Naive thymus-derived CD4-positive, alpha-beta T cell (primary cell): ENCODE measurements at regions of chr17 and their contacts with region 1.

Region 1: GRCh38 chr17:48074315-48075081 is 26.3 kb downstream of the NFE2L1 start:
- DNase-seq: peak; percentile 21 to 74 (median 65)
- ATAC-seq: peak; percentile 85
- H3K4me3 ChIP-seq: no peak overlapping the region
- H3K4me3 Mint-ChIP-seq: no peak overlapping the region
- H3K27ac ChIP-seq: no peak overlapping the region
- H3K27ac Mint-ChIP-seq: peak overlapping the region in 2 of 9 donors; percentile 9 to 25
- H3K4me1 ChIP-seq: no peaks in the 10 kb centered on the region
- H3K4me1 Mint-ChIP-seq: peaks cover 0 to 8% (median 0%) of the 10 kb centered on the region in 7 donors
- H3K27me3 ChIP-seq: no peaks in the 10 kb centered on the region
- H3K27me3 Mint-ChIP-seq: no peaks in the 10 kb centered on the region

Region 2: DNA sequence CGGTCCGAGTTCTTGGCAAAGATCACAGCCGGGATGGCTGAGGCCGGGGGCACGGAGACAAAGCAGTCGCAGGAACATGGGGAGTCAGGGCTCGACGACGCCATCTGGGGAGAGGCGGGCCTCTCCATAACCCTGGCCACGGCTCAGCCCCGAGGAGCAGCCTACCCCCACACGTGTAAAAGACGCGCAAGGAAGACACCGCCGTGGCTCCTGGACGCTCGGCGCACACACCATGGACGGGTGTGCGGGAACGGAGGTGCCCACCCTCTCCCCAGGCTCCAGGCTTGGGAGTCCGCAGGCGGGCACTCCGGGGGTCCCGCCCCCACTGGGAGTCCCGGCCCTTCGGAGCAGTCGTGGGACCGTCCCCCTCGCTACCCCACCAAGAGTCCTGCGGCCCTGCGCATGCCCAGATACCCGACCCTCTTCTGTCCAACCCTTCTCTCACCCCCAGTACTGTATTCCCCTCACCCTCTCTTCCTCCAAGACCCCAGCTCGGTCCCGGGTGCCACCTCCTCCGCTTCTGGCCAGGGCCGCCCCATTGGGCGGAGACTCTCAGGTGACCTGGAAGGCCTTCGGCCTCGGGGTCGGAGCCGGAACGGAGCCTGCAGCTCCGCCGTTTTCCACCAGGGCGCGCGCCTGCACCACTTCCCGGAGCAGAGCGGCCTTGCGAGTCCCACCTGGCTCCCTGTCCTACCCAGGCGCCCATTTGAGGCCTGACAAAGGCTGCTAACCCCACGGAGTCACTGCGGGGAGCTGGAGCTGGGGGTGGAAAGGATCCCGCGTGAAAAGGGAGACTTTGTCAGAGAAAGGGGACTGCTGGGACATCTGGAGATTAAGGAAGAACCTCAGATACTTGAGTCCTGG is 233.5 kb before region 1 on chr17 and contains the start of gene SCRN2:
- CTCF ChIA-PET with region 1: no interaction called
- POLR2A ChIA-PET with region 1: no interaction called
- intact Hi-C with region 1: loop called in 1 of 2 experiments (anchors 5 kb)
- DNase-seq: peak; percentile 71 to 94 (median 81)
- ATAC-seq: peak; percentile 94
- H3K4me3 ChIP-seq: peak within 1 kb of the TSS; percentile 95
- H3K4me3 Mint-ChIP-seq: peak within 1 kb of the TSS; percentile 84 to 99 (median 94)
- H3K27ac ChIP-seq: peak within 1 kb of the TSS; percentile 75
- H3K27ac Mint-ChIP-seq: peak within 1 kb of the TSS; percentile 55 to 93 (median 86)
- H3K4me1 ChIP-seq: peaks cover 19 to 21% of the 10 kb centered on the region in 2 donors
- H3K4me1 Mint-ChIP-seq: peaks cover 9 to 49% (median 38%) of the 10 kb centered on the region in 7 donors
- H3K27me3 ChIP-seq: peaks cover 0 to 7% of the 10 kb centered on the region in 2 donors
- H3K27me3 Mint-ChIP-seq: peaks cover 6 to 23% (median 18%) of the 10 kb centered on the region in 5 donors
- total RNA-seq, gene SCRN2: 33.4 to 55.9 (median 41.4) TPM

Region 3: GRCh38 chr17:47884905-47885733 is 189.4 kb before region 1 on chr17:
- CTCF ChIA-PET with region 1: no interaction called
- POLR2A ChIA-PET with region 1: no interaction called
- intact Hi-C with region 1: no loop called
- DNase-seq: peak in 6 of 9 donors; percentile 10 to 37 (median 34)
- ATAC-seq: peak; percentile 36
- H3K4me3 ChIP-seq: no peak overlapping the region
- H3K4me3 Mint-ChIP-seq: peak overlapping the region in 8 of 10 donors; percentile 42 to 70 (median 65)
- H3K27ac ChIP-seq: no peak overlapping the region
- H3K27ac Mint-ChIP-seq: peak overlapping the region in 5 of 9 donors; percentile 8 to 64 (median 26)
- H3K4me1 ChIP-seq: peaks cover 0 to 31% of the 10 kb centered on the region in 2 donors
- H3K4me1 Mint-ChIP-seq: peaks cover 21 to 43% (median 37%) of the 10 kb centered on the region in 7 donors
- H3K27me3 ChIP-seq: no peaks in the 10 kb centered on the region
- H3K27me3 Mint-ChIP-seq: peaks cover 0 to 5% (median 0%) of the 10 kb centered on the region in 5 donors

Region 4: DNA sequence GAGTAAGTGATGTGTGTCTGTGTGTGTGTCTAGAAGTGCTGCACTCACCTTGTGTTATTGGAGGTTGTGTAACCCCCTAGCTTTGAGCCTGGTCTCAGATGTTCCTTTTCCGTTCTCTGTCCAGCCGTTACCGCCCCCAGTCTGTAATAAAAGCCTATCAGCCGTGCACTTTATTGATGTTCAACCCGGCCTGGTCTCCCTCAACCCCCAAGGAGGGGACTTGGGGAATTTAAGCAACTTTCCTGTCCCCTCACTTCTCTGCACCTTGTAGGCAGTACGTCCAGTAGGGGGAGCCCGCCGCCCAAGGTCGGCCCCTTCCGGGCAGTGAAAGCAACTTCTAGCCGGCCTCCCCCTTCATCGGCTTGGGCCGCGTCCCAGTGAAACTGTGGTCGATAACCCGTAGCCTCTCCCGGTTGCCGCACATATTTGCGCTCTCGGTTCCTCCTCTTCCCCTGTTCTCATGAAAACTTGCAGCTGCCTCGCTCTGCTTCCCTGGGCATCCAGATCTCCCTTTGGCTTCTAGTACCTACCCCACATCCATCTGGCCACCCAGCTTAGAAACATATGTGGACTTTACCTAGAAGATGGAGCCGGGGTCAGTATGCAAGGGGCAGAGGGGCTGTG is 125.2 kb before region 1 on chr17:
- CTCF ChIA-PET with region 1: interaction called, 9 read pairs
- POLR2A ChIA-PET with region 1: no interaction called
- intact Hi-C with region 1: loop called in 1 of 2 experiments (anchors 1 kb)
- DNase-seq: peak; percentile 47 to 87 (median 62)
- ATAC-seq: peak; percentile 82
- H3K4me3 ChIP-seq: peak overlapping the region; percentile 44
- H3K4me3 Mint-ChIP-seq: peak overlapping the region; percentile 63 to 90 (median 77)
- H3K27ac ChIP-seq: peak overlapping the region; percentile 55
- H3K27ac Mint-ChIP-seq: peak overlapping the region; percentile 57 to 86 (median 76)
- H3K4me1 ChIP-seq: peaks cover 22 to 40% of the 10 kb centered on the region in 2 donors
- H3K4me1 Mint-ChIP-seq: peaks cover 30 to 56% (median 49%) of the 10 kb centered on the region in 7 donors
- H3K27me3 ChIP-seq: no peaks in the 10 kb centered on the region
- H3K27me3 Mint-ChIP-seq: no peaks in the 10 kb centered on the region

Region 5: GRCh38 chr17:47970704-47971463 is 103.6 kb before region 1 on chr17 and contains the start of gene CDK5RAP3:
- CTCF ChIA-PET with region 1: interaction called, 7 read pairs
- POLR2A ChIA-PET with region 1: no interaction called
- intact Hi-C with region 1: loop called in 1 of 2 experiments (anchors 2 kb)
- DNase-seq: peak; percentile 93 to 99 (median 97)
- ATAC-seq: peak; percentile 100
- H3K4me3 ChIP-seq: peak within 1 kb of the TSS; percentile 96
- H3K4me3 Mint-ChIP-seq: peak within 1 kb of the TSS; percentile 95 to 100 (median 99)
- H3K27ac ChIP-seq: peak within 1 kb of the TSS; percentile 71
- H3K27ac Mint-ChIP-seq: peak within 1 kb of the TSS; percentile 83 to 96 (median 93)
- H3K4me1 ChIP-seq: peaks cover 6 to 12% of the 10 kb centered on the region in 2 donors
- H3K4me1 Mint-ChIP-seq: peaks cover 14 to 41% (median 26%) of the 10 kb centered on the region in 7 donors
- H3K27me3 ChIP-seq: no peaks in the 10 kb centered on the region
- H3K27me3 Mint-ChIP-seq: no peaks in the 10 kb centered on the region
- total RNA-seq, gene CDK5RAP3: 238 to 349 (median 276) TPM

Region 6: DNA sequence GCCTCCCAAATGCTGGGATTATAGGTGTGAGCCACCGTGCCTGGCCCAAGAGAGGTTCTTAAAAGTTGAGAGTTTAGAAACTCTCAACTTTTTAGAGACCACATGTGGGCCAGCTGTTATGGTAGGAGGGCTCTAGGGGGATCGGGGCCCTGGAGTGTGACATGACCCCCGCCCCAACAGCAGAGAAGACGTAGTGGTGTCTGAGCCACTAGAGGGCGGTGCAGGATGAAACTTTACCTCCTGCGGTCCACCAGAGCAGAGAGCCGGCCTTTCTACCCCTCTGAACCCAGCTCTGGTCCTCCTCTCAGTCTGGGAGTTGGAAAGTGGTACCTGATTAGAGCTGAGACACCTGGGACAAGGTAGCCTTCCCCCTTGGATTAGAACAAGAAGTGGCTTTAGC is 96.2 kb before region 1 on chr17:
- CTCF ChIA-PET with region 1: interaction called, 12 read pairs
- POLR2A ChIA-PET with region 1: no interaction called
- intact Hi-C with region 1: loop called in 1 of 2 experiments (anchors 1 kb)
- DNase-seq: peak in 7 of 9 donors; percentile 18 to 52 (median 35)
- ATAC-seq: peak; percentile 78
- H3K4me3 ChIP-seq: no peak overlapping the region
- H3K4me3 Mint-ChIP-seq: no peak overlapping the region
- H3K27ac ChIP-seq: no peak overlapping the region
- H3K27ac Mint-ChIP-seq: no peak overlapping the region
- H3K4me1 ChIP-seq: peaks cover 0 to 5% of the 10 kb centered on the region in 2 donors
- H3K4me1 Mint-ChIP-seq: peaks cover 0 to 12% (median 4%) of the 10 kb centered on the region in 7 donors
- H3K27me3 ChIP-seq: no peaks in the 10 kb centered on the region
- H3K27me3 Mint-ChIP-seq: no peaks in the 10 kb centered on the region

Region 7: GRCh38 chr17:48011405-48012150 is 62.9 kb before region 1 on chr17:
- CTCF ChIA-PET with region 1: no interaction called
- POLR2A ChIA-PET with region 1: no interaction called
- intact Hi-C with region 1: loop called in 1 of 2 experiments (anchors 1 kb)
- DNase-seq: peak in 7 of 9 donors; percentile 20 to 34 (median 32)
- ATAC-seq: peak; percentile 74
- H3K4me3 ChIP-seq: peak overlapping the region; percentile 47
- H3K4me3 Mint-ChIP-seq: peak overlapping the region; percentile 70 to 90 (median 78)
- H3K27ac ChIP-seq: no peak overlapping the region
- H3K27ac Mint-ChIP-seq: peak overlapping the region in 1 of 9 donors; percentile 48
- H3K4me1 ChIP-seq: peaks cover 9% of the 10 kb centered on the region in 2 donors
- H3K4me1 Mint-ChIP-seq: peaks cover 9 to 25% (median 13%) of the 10 kb centered on the region in 7 donors
- H3K27me3 ChIP-seq: peaks cover 7 to 10% of the 10 kb centered on the region in 2 donors
- H3K27me3 Mint-ChIP-seq: peaks cover 44 to 66% (median 55%) of the 10 kb centered on the region in 5 donors

Region 8: GRCh38 chr17:48037036-48037837 is 37.3 kb before region 1 on chr17 and contains the start of gene COPZ2:
- CTCF ChIA-PET with region 1: interaction called, 5 read pairs
- POLR2A ChIA-PET with region 1: no interaction called
- intact Hi-C with region 1: loop called in 1 of 2 experiments (anchors 1 kb)
- DNase-seq: peak; percentile 49 to 68 (median 64)
- ATAC-seq: peak; percentile 97
- H3K4me3 ChIP-seq: peak within 1 kb of the TSS; percentile 67
- H3K4me3 Mint-ChIP-seq: peak within 1 kb of the TSS; percentile 76 to 95 (median 88)
- H3K27ac ChIP-seq: peak within 1 kb of the TSS; percentile 45
- H3K27ac Mint-ChIP-seq: peak within 1 kb of the TSS in 4 of 9 donors; percentile 26 to 61 (median 45)
- H3K4me1 ChIP-seq: peaks cover 0 to 3% of the 10 kb centered on the region in 2 donors
- H3K4me1 Mint-ChIP-seq: peaks cover 0 to 17% (median 12%) of the 10 kb centered on the region in 7 donors
- H3K27me3 ChIP-seq: peaks cover 5 to 6% of the 10 kb centered on the region in 2 donors
- H3K27me3 Mint-ChIP-seq: peaks cover 6 to 55% (median 27%) of the 10 kb centered on the region in 5 donors
- total RNA-seq, gene COPZ2: 0.81 to 5.5 (median 1.9) TPM

Region 9: GRCh38 chr17:48055442-48056237 is 18.9 kb before region 1 on chr17:
- CTCF ChIA-PET with region 1: no interaction called
- POLR2A ChIA-PET with region 1: no interaction called
- intact Hi-C with region 1: no loop called
- DNase-seq: no peak
- ATAC-seq: no peak
- H3K4me3 ChIP-seq: no peak overlapping the region
- H3K4me3 Mint-ChIP-seq: peak overlapping the region in 1 of 10 donors; percentile 71
- H3K27ac ChIP-seq: no peak overlapping the region
- H3K27ac Mint-ChIP-seq: peak overlapping the region in 6 of 9 donors; percentile 24 to 88 (median 82)
- H3K4me1 ChIP-seq: no peaks in the 10 kb centered on the region
- H3K4me1 Mint-ChIP-seq: peaks cover 29 to 50% (median 44%) of the 10 kb centered on the region in 7 donors
- H3K27me3 ChIP-seq: no peaks in the 10 kb centered on the region
- H3K27me3 Mint-ChIP-seq: no peaks in the 10 kb centered on the region